HEK293T (cell line): ENCODE measurements at regions of chr10 and their contacts with region 1.

Region 1: DNA sequence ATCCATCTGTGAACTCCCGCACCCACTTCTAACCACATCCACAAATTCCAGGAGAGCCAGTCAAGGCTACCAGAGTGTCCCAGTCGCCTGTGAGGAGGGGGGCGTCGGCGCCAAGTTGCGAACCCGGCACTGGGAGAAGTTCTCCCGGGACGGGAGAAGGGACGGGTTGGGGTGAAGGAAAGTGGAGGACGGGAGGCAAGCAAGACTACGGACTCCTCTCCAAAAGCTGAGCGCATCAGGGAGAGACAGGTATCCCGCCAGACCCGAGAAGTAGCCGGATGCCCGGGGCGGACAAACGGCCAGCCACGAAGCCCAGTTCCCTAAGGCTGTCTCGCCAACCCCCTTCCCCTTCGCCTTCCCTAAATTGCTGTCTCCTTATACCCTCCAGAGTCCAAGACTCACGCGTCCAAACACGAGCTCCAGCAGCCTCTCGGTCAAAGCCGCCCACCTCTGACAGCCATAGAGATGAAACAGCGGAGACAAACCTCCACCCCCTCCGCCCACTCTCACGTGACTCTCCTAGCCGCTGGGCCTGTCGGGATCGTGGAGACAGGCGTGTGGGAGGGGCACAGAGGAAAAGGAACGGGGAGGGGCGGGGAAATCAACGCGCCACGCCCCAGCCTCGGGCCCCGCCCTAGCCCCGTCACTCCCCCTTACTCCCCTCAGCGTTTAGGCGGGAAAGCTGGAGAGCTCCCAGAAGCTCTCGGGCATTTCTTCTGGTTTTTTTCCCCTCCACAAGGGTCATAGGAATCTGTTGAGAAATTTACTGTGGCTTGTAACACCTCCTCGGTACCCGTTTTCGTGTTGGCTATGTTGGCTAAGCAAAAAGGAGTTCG is at the start of gene MICU1:
- DNase-seq: peak; percentile 97

Region 2: GRCh38 chr10:72567884-72568640 is 57.8 kb before region 1 on chr10:
- CTCF ChIA-PET with region 1: no interaction called
- POLR2A ChIA-PET with region 1: no interaction called
- DNase-seq: peak; percentile 43

Region 3: DNA sequence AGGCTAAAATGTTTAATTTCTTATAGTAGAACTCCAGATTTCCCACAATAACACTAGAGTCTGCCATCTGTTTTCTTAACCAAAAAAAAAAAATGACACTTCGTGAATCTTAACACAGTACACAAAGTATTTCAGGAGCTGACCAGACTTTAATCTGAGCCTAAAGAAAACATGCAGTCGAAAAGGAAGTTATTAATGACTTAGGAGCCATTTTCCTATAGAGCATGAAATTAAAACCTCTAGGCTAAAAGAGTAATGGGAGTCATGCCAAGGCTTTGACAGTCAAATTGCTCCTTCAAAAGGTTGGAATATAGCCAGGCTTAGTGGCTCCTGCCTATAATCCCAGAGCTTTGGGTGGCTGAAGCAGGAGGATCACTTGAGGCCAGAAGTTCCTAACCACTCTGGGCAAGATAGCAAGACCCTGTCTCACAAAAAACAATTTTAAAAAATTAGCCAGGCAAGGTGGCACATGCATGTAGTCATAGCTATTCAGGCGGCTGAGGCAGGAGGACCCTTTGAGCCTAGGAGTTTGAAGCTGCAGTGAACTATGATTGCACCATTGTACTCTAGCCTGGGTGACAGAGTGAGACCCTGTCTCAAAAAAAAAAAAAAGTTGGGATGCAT is 13.5 kb before region 1 on chr10:
- CTCF ChIA-PET with region 1: no interaction called
- POLR2A ChIA-PET with region 1: interaction called, 11 read pairs
- DNase-seq: peak; percentile 23

Region 4: DNA sequence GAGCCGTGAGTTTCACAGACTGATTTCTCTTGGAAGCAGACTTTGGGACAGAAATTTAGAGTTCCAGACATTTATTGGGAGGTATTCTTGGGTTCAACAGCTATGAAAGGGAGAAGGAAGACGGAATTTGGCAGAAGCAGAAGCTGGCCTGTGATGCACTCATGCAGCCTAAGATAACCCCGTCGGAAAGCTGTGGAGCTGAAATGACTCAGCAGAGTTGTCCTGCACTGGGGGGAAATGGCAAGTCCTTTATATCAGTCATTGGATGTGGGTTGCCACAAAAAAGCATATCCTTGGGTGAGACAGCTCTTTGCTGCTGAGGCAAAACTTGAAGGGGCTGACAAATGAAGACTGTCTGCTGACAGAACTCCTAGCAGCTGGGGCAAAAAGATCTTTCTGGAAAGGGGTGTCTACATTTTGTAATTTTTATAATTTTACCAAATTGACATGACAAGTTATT is 11.6 kb after region 1 on chr10:
- CTCF ChIA-PET with region 1: no interaction called
- POLR2A ChIA-PET with region 1: interaction called, 10 read pairs
- DNase-seq: no peak

Region 5: GRCh38 chr10:72692057-72692910 is 66.5 kb after region 1 on chr10 and contains the start of gene MCU:
- CTCF ChIA-PET with region 1: no interaction called
- POLR2A ChIA-PET with region 1: interaction called, 18 read pairs
- DNase-seq: peak; percentile 95